WTC11 (cell line): ENCODE measurements at regions of chr5 and their contacts with region 1.

Region 1: GRCh38 chr5:134586866-134587524 is 45.6 kb downstream of the SAR1B start:
- DNase-seq: peak; percentile 95
- ATAC-seq: peak; percentile 89
- H3K4me3 Mint-ChIP-seq: peak overlapping the region; percentile 22
- H3K27ac Mint-ChIP-seq: peak overlapping the region; percentile 93
- H3K4me1 Mint-ChIP-seq: peaks cover 17% of the 10 kb centered on the region
- H3K27me3 Mint-ChIP-seq: no peaks in the 10 kb centered on the region
- CTCF ChIP-seq: peak; percentile 76

Region 2: GRCh38 chr5:134225618-134226440 is 361.2 kb before region 1 on chr5 and contains the start of gene PPP2CA:
- CTCF ChIA-PET with region 1: interaction called, 16 read pairs
- POLR2A ChIA-PET with region 1: interaction called, 5 read pairs
- DNase-seq: peak; percentile 99
- ATAC-seq: peak; percentile 85
- H3K4me3 Mint-ChIP-seq: peak within 1 kb of the TSS; percentile 87
- H3K27ac Mint-ChIP-seq: peak within 1 kb of the TSS; percentile 98
- H3K4me1 Mint-ChIP-seq: peaks cover 43% of the 10 kb centered on the region
- H3K27me3 Mint-ChIP-seq: no peaks in the 10 kb centered on the region
- CTCF ChIP-seq: no peak
- total RNA-seq, gene PPP2CA: 178 to 186 TPM (median 178 TPM) in 3 replicates

Region 3: GRCh38 chr5:134380346-134380745 is 206.6 kb before region 1 on chr5:
- CTCF ChIA-PET with region 1: interaction called, 14 read pairs
- POLR2A ChIA-PET with region 1: no interaction called
- DNase-seq: no peak
- ATAC-seq: no peak
- H3K4me3 Mint-ChIP-seq: no peak overlapping the region
- H3K27ac Mint-ChIP-seq: no peak overlapping the region
- H3K4me1 Mint-ChIP-seq: no peaks in the 10 kb centered on the region
- H3K27me3 Mint-ChIP-seq: no peaks in the 10 kb centered on the region
- CTCF ChIP-seq: no peak

Region 4: GRCh38 chr5:134430001-134430569 is 156.9 kb before region 1 on chr5:
- CTCF ChIA-PET with region 1: interaction called, 17 read pairs
- POLR2A ChIA-PET with region 1: no interaction called
- DNase-seq: peak; percentile 33
- ATAC-seq: peak; percentile 81
- H3K4me3 Mint-ChIP-seq: peak overlapping the region; percentile 65
- H3K27ac Mint-ChIP-seq: peak overlapping the region; percentile 83
- H3K4me1 Mint-ChIP-seq: peaks cover 58% of the 10 kb centered on the region
- H3K27me3 Mint-ChIP-seq: no peaks in the 10 kb centered on the region
- CTCF ChIP-seq: no peak

Region 5: GRCh38 chr5:134479839-134480238 is 107.2 kb before region 1 on chr5:
- CTCF ChIA-PET with region 1: no interaction called
- POLR2A ChIA-PET with region 1: no interaction called
- DNase-seq: no peak
- ATAC-seq: no peak
- H3K4me3 Mint-ChIP-seq: no peak overlapping the region
- H3K27ac Mint-ChIP-seq: no peak overlapping the region
- H3K4me1 Mint-ChIP-seq: no peaks in the 10 kb centered on the region
- H3K27me3 Mint-ChIP-seq: no peaks in the 10 kb centered on the region; the same call in 1 of the 2 replicates
- CTCF ChIP-seq: no peak

Region 6: DNA sequence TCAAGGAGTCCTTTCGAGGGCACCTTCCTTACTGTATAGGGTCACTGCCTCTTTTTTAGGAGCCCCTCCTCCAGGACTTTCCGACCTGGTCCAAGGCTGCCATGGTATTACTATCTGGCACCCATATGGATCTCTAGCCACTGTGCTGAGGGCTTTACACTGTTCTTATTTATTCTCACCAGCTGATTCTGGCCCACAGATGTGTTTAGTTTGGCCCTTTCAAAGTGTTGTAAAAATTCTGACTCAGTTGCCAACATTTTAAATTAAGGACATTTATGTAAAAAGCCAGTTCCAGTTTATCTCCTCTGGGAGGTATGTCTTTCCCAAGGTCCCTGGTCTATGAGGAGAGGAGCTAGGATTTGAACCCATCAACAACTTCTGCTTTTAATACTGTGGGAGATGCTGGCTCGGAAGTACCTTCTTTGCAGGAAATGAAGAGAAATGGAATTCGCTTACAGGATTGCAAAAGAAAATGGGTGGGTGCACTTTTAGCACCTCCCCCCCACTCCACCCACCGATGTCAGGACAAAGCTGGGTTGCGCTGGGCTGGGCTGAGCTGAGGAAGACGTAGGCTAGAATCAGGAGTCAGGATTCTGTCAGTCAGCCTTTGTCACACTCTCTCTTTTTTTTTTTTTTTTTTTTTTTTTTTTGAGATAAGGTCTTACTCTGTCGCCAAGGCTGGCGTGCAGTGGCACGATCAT is 53.7 kb before region 1 on chr5:
- CTCF ChIA-PET with region 1: interaction called, 37 read pairs
- POLR2A ChIA-PET with region 1: interaction called, 4 read pairs
- DNase-seq: no peak
- ATAC-seq: no peak
- H3K4me3 Mint-ChIP-seq: no peak overlapping the region
- H3K27ac Mint-ChIP-seq: peak overlapping the region; percentile 48
- H3K4me1 Mint-ChIP-seq: peaks cover 64% of the 10 kb centered on the region
- H3K27me3 Mint-ChIP-seq: no peaks in the 10 kb centered on the region
- CTCF ChIP-seq: no peak

Region 7: GRCh38 chr5:134609232-134609851 is 22.3 kb after region 1 on chr5:
- CTCF ChIA-PET with region 1: interaction called, 24 read pairs
- POLR2A ChIA-PET with region 1: interaction called, 3 read pairs
- DNase-seq: no peak
- ATAC-seq: no peak
- H3K4me3 Mint-ChIP-seq: no peak overlapping the region
- H3K27ac Mint-ChIP-seq: no peak overlapping the region
- H3K4me1 Mint-ChIP-seq: peaks cover 10% of the 10 kb centered on the region
- H3K27me3 Mint-ChIP-seq: no peaks in the 10 kb centered on the region
- CTCF ChIP-seq: no peak

Region 8: GRCh38 chr5:134662971-134663370 is 76.0 kb after region 1 on chr5:
- CTCF ChIA-PET with region 1: interaction called, 12 read pairs
- POLR2A ChIA-PET with region 1: no interaction called
- DNase-seq: no peak
- ATAC-seq: no peak
- H3K4me3 Mint-ChIP-seq: no peak overlapping the region
- H3K27ac Mint-ChIP-seq: no peak overlapping the region
- H3K4me1 Mint-ChIP-seq: 0 out of 2 replicates have a peak, but pooled peaks cover 2% of the 10 kb centered on the region
- H3K27me3 Mint-ChIP-seq: no peaks in the 10 kb centered on the region
- CTCF ChIP-seq: no peak

Region 9: GRCh38 chr5:134825212-134825611 is 238.2 kb after region 1 on chr5:
- CTCF ChIA-PET with region 1: no interaction called
- POLR2A ChIA-PET with region 1: no interaction called
- DNase-seq: no peak
- ATAC-seq: no peak
- H3K4me3 Mint-ChIP-seq: no peak overlapping the region
- H3K27ac Mint-ChIP-seq: no peak overlapping the region
- H3K4me1 Mint-ChIP-seq: no peaks in the 10 kb centered on the region
- H3K27me3 Mint-ChIP-seq: no peaks in the 10 kb centered on the region
- CTCF ChIP-seq: no peak